ENCODE measurements at regions of chr3 and their contacts with region 1.

Region 1: GRCh38 chr3:171600030-171600429 is 139.8 kb upstream of the TNIK start:
- DNase-seq: no peak
- CTCF ChIP-seq: no peak

Region 2: GRCh38 chr3:171614318-171614921 is 14.4 kb after region 1 on chr3:
- CTCF ChIA-PET with region 1: interaction called, 12 read pairs
- POLR2A ChIA-PET with region 1: no interaction called
- DNase-seq: peak; percentile 35
- CTCF ChIP-seq: peak; percentile 61

Measured in GM10248 (cell line).